ENCODE measurements at regions of chr19 and their contacts with region 1.

Region 1: DNA sequence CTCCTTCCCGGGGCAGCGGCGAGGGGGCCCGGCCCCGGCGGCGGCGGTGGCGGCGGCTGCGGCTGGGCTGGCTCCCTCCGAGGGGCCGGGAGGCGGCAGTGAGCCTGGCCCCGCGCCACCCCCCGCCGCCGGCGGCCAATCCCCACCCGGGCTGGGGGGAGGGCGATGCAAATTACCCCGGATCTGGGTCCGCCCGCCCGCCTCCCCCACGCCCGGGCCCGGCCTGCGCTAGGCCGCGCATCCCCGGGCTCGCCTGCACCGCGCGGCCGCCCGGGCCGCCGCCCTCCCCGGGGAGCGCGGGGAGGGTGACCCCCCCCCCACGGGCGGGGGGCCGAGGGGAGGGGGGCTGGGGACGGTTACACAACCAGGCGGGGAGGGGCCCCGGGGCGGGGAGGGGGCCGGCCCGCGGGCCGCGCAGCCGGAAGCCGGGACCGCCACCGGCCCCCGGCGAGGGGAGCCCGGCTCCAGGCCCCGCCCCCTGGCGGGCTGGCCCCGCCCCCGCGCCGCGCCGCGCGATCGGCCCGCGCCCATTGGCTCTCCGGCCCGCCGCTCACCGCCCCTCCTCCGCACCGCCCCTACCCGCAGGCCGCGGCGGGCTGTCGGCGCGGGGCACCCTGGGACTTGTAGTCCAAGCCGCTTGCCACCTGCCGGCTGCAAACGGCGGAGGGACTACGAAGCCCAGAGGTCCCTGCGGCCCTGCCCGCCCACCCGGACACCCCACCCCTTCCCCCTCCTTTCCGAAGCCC is 1.1 kb downstream of the ZBTB7A start:
- DNase-seq: peak; percentile 89 to 99 (median 94)
- ATAC-seq: peak; percentile 84
- H3K4me3 ChIP-seq: peak overlapping the region; percentile 100
- H3K27ac ChIP-seq: peak overlapping the region; percentile 56; the same call in 1 of the 3 replicates
- H3K4me1 ChIP-seq: peaks cover 25 to 74% of the 10 kb centered on the region in 2 experiments
- H3K27me3 ChIP-seq: no peaks in the 10 kb centered on the region
- CTCF ChIP-seq: no peak
- EP300 ChIP-seq: no peak; the same call in 1 of the 2 replicates
- POLR2A ChIP-seq: no peak
- RAD21 ChIP-seq: no peak

Region 2: GRCh38 chr19:3830621-3831589 is 234.7 kb before region 1 on chr19:
- CTCF ChIA-PET with region 1: no interaction called
- POLR2A ChIA-PET with region 1: no interaction called
- in situ Hi-C with region 1: no loop called
- intact Hi-C with region 1: no loop called
- DNase-seq: no peak
- ATAC-seq: no peak
- H3K4me3 ChIP-seq: no peak overlapping the region
- H3K27ac ChIP-seq: no peak overlapping the region
- H3K4me1 ChIP-seq: peaks cover 6 to 39% of the 10 kb centered on the region in 2 experiments; a peak in 4 of 5 replicates
- H3K27me3 ChIP-seq: peaks cover 11 to 28% of the 10 kb centered on the region in 2 experiments; a peak in 3 of 5 replicates
- CTCF ChIP-seq: no peak
- EP300 ChIP-seq: no peak
- POLR2A ChIP-seq: no peak
- RAD21 ChIP-seq: no peak

Region 3: DNA sequence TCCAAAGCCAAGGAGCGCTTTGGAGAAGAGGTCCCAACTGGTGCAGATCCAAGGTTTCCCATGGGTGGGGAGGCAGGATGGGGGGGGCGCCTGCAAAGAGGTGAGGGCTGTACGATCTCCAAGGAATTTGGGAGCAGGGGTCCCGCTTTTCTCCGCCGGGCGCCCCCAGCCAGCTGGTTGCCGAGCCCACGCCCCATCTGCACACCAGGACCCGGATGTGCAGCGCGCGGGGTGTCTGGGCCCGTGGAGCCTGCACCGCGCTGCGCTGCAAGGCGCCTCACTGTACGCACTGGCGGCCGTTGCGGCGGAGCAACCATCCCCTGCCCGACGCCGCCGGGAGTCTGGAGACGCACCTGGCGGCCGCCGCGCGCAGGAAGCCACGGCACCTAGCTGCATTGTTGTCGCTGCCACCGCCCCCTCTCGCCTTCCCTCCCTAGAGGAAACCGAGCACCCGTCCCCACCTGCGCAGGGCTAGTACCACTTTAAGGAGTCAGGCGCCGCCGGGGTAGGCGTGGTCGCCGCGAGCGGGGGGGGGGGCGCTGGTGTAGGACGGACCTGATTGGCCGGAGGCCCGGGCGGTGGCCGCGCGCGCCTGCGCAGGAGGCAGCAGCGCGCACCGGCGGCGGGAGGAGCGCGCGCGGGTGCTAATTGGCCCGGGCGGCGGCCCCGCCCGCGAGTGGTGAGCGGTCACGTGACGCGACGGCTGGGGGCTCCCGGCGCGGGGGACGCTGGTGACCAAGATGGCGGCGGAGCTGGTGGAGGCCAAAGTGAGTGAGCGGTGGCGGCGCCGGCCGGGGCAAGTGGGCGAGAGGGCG is 58.4 kb before region 1 on chr19 and contains the start of gene PIAS4:
- CTCF ChIA-PET with region 1: no interaction called
- POLR2A ChIA-PET with region 1: no interaction called
- in situ Hi-C with region 1: no loop called
- intact Hi-C with region 1: loop called (anchors 5 kb)
- DNase-seq: peak; percentile 98 to 100 (median 100)
- ATAC-seq: peak; percentile 96
- H3K4me3 ChIP-seq: peak within 1 kb of the TSS; percentile 90
- H3K27ac ChIP-seq: peak within 1 kb of the TSS; percentile 84
- H3K4me1 ChIP-seq: peaks cover 22 to 56% of the 10 kb centered on the region in 2 experiments; a peak in 4 of 5 replicates
- H3K27me3 ChIP-seq: no peaks in the 10 kb centered on the region
- CTCF ChIP-seq: no peak
- EP300 ChIP-seq: no peak
- POLR2A ChIP-seq: peak; percentile 72
- RAD21 ChIP-seq: no peak
- polyA plus RNA-seq, gene PIAS4: 0.27 TPM

Region 4: DNA sequence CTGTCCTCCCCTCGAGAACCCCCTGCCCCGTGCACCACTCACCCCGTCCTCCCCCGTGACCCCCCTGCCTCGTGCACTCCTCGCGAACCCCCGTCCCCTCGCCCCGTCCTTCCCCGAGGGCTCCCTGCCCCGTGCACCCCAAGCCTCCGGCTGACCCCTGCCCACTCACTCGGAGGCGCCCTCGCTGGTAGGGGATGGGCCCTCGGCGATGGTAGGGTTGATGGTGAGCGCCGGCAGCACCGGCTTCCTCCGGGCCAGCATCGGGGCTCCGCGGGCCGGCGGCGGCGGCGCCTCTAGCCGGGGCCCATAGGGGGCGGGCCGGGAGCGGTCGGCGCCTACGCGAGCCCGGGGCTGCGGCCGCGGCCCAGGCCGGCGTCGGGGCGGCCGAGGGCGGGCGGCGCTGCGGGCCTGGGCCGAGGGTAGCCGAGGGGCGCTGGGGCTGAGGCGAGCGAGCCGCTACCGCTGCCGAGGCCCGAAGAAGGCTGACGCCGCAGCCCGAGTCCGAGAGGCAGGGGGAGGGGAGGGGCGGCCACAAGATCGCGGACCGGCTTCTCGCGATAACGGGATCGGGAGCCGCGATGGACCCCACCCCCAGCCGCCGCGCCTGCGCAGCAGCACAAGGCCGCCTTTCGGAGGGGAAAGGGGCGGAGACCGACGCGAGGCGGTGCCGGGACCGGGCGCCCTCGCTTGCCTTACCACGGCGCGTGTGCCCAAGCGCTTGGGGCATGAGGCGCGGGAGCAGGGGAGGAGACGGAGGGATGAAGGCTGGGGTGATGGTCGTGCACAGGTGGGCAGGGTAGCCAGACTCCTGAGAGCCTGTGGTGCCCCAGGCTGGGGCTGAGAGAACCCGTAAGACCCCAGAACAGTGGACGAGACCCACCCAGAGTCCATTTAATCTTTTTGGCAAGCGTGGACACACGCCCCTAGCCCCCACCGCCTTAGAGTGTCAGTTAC is 58.3 kb after region 1 on chr19 and contains the start of gene MAP2K2:
- CTCF ChIA-PET with region 1: no interaction called
- POLR2A ChIA-PET with region 1: no interaction called
- in situ Hi-C with region 1: no loop called
- intact Hi-C with region 1: loop called (anchors 5 kb)
- DNase-seq: peak; percentile 96 to 99 (median 98)
- ATAC-seq: peak; percentile 97
- H3K4me3 ChIP-seq: peak within 1 kb of the TSS; percentile 91
- H3K27ac ChIP-seq: peak within 1 kb of the TSS; percentile 74
- H3K4me1 ChIP-seq: peaks cover 13 to 25% of the 10 kb centered on the region in 2 experiments
- H3K27me3 ChIP-seq: no peaks in the 10 kb centered on the region
- CTCF ChIP-seq: peak in 2 of 3 experiments; percentile 3 to 55; a peak in 3 of 6 replicates
- EP300 ChIP-seq: no peak
- POLR2A ChIP-seq: peak; percentile 92
- RAD21 ChIP-seq: no peak
- polyA plus RNA-seq, gene MAP2K2: 1.0 to 5.0 TPM

Region 5: DNA sequence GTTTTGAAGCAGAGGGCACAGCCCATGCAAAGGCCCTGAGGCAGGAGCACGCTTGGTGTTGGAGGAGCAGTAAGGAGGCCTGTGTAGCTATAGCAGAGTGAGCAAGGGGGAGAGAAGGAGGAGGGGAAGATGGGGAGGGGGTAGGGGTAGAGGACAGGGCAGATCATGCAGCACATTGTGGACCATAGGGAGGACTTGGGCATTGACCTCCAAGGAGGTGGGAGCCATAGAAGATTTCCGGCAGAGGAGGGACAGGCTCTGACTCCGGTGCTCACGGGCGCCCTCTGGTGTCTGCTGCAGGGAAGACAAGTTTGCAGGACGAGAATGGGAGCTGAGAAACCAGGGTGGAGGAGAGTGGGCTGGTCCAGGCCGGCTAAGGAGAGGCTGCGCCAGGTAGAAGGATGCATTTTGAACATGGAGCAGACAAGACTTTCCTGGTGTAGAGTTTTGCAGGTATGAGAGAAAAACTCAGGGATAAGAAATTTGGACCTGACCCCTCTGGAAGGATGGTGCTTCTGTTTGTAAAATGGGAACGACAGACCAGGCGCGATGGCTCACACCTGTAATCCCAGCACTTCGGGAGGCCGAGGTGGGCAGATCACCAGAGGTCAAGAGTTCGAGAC is 74.1 kb after region 1 on chr19:
- CTCF ChIA-PET with region 1: no interaction called
- POLR2A ChIA-PET with region 1: no interaction called
- in situ Hi-C with region 1: no loop called
- intact Hi-C with region 1: no loop called
- DNase-seq: peak; percentile 82 to 86 (median 84)
- ATAC-seq: peak; percentile 98
- H3K4me3 ChIP-seq: no peak overlapping the region
- H3K27ac ChIP-seq: no peak overlapping the region
- H3K4me1 ChIP-seq: peaks cover 0 to 12% of the 10 kb centered on the region in 2 experiments; a peak in 2 of 5 replicates
- H3K27me3 ChIP-seq: no peaks in the 10 kb centered on the region; a peak in 1 of 5 replicates
- CTCF ChIP-seq: peak; percentile 92 to 94 (median 93)
- EP300 ChIP-seq: no peak
- POLR2A ChIP-seq: no peak
- RAD21 ChIP-seq: peak; percentile 40 to 66

Region 6: GRCh38 chr19:4182084-4182810 is 116.6 kb after region 1 on chr19 and contains the starts of genes ANKRD24 and SIRT6:
- CTCF ChIA-PET with region 1: no interaction called
- POLR2A ChIA-PET with region 1: no interaction called
- in situ Hi-C with region 1: no loop called
- intact Hi-C with region 1: loop called (anchors 10 kb)
- DNase-seq: peak; percentile 98 to 99 (median 99)
- ATAC-seq: peak; percentile 83
- H3K4me3 ChIP-seq: peak within 1 kb of the TSS; percentile 84
- H3K27ac ChIP-seq: peak within 1 kb of the TSS; percentile 73
- H3K4me1 ChIP-seq: peaks cover 17 to 49% of the 10 kb centered on the region in 2 experiments
- H3K27me3 ChIP-seq: no peaks in the 10 kb centered on the region
- CTCF ChIP-seq: no peak
- EP300 ChIP-seq: peak; percentile 68
- POLR2A ChIP-seq: peak; percentile 79
- RAD21 ChIP-seq: no peak
- polyA plus RNA-seq, gene ANKRD24: not detected
- polyA plus RNA-seq, gene SIRT6: 1.4 to 1.8 TPM

Region 7: GRCh38 chr19:4197625-4198466 is 132.2 kb after region 1 on chr19:
- CTCF ChIA-PET with region 1: no interaction called
- POLR2A ChIA-PET with region 1: no interaction called
- in situ Hi-C with region 1: no loop called
- intact Hi-C with region 1: no loop called
- DNase-seq: peak in 3 of 4 experiments; percentile 51 to 85 (median 84)
- ATAC-seq: peak; percentile 71
- H3K4me3 ChIP-seq: no peak overlapping the region
- H3K27ac ChIP-seq: no peak overlapping the region
- H3K4me1 ChIP-seq: peaks cover 0 to 16% of the 10 kb centered on the region in 2 experiments; a peak in 2 of 5 replicates
- H3K27me3 ChIP-seq: peaks cover 8 to 30% of the 10 kb centered on the region in 2 experiments
- CTCF ChIP-seq: no peak
- EP300 ChIP-seq: no peak
- POLR2A ChIP-seq: no peak
- RAD21 ChIP-seq: no peak

Region 8: GRCh38 chr19:4304530-4305252 is 239.1 kb after region 1 on chr19 and contains the start of gene FSD1:
- CTCF ChIA-PET with region 1: no interaction called
- POLR2A ChIA-PET with region 1: no interaction called
- in situ Hi-C with region 1: no loop called
- intact Hi-C with region 1: no loop called
- DNase-seq: peak; percentile 84 to 96 (median 94)
- ATAC-seq: peak; percentile 98
- H3K4me3 ChIP-seq: peak within 1 kb of the TSS; percentile 16; the same call in 1 of the 2 replicates
- H3K27ac ChIP-seq: no peak within 1 kb of the TSS
- H3K4me1 ChIP-seq: peaks cover 7 to 22% of the 10 kb centered on the region in 2 experiments; a peak in 4 of 5 replicates
- H3K27me3 ChIP-seq: peaks cover 0 to 5% of the 10 kb centered on the region in 2 experiments; a peak in 1 of 5 replicates
- CTCF ChIP-seq: no peak
- EP300 ChIP-seq: no peak
- POLR2A ChIP-seq: no peak
- RAD21 ChIP-seq: no peak
- polyA plus RNA-seq, gene FSD1: 0.11 TPM in 1 of 2 experiments, not detected in the other

Measured in K562 (cell line).